PC-3 (cell line): ENCODE measurements at regions of chr3 and their contacts with region 1.

Region 1: GRCh38 chr3:12629560-12629959 is 34.4 kb downstream of the RAF1 start:
- DNase-seq: peak; percentile 15
- ATAC-seq: peak; percentile 91
- H3K4me3 ChIP-seq: no peak overlapping the region
- H3K27ac ChIP-seq: no peak overlapping the region
- H3K4me1 ChIP-seq: peaks cover 6% of the 10 kb centered on the region; the same call in 1 of the 2 replicates
- H3K27me3 ChIP-seq: no peaks in the 10 kb centered on the region
- CTCF ChIP-seq: no peak

Region 2: GRCh38 chr3:12484198-12484974 is 145.2 kb before region 1 on chr3 and contains the start of gene TSEN2:
- CTCF ChIA-PET with region 1: no interaction called
- POLR2A ChIA-PET with region 1: no interaction called
- intact Hi-C with region 1: no loop called
- DNase-seq: peak; percentile 98
- ATAC-seq: peak; percentile 80
- H3K4me3 ChIP-seq: peak within 1 kb of the TSS; percentile 81
- H3K27ac ChIP-seq: peak within 1 kb of the TSS; percentile 81
- H3K4me1 ChIP-seq: peaks cover 57% of the 10 kb centered on the region
- H3K27me3 ChIP-seq: no peaks in the 10 kb centered on the region
- CTCF ChIP-seq: no peak
- total RNA-seq, gene TSEN2: 40.2 and 51.0 TPM in 2 replicates

Region 3: DNA sequence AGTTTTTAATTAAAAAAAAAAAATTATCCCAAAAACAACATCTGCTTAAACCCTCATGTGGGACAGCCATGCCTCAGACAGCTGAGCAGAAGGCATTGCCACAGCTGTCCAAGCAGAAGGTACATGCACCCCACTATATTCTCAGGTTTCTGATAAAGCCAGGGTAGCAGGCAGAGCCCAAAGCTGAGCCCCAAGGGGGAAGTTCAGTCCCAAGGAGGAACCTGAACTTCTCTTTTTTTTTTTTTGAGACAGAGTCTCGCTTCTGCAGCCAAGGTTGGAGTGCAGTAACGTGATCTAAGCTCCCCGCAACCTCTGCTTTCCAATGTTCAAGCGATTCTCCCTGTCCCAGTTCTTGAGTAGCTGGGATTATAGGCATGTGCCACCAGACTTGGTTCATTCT is 39.5 kb before region 1 on chr3:
- CTCF ChIA-PET with region 1: no interaction called
- POLR2A ChIA-PET with region 1: interaction called, 4 read pairs
- intact Hi-C with region 1: loop called (anchors 5 kb)
- DNase-seq: no peak
- ATAC-seq: no peak
- H3K4me3 ChIP-seq: no peak overlapping the region
- H3K27ac ChIP-seq: no peak overlapping the region
- H3K4me1 ChIP-seq: 0 out of 2 replicates have a peak, but pooled peaks cover 6% of the 10 kb centered on the region
- H3K27me3 ChIP-seq: no peaks in the 10 kb centered on the region
- CTCF ChIP-seq: no peak

Region 4: DNA sequence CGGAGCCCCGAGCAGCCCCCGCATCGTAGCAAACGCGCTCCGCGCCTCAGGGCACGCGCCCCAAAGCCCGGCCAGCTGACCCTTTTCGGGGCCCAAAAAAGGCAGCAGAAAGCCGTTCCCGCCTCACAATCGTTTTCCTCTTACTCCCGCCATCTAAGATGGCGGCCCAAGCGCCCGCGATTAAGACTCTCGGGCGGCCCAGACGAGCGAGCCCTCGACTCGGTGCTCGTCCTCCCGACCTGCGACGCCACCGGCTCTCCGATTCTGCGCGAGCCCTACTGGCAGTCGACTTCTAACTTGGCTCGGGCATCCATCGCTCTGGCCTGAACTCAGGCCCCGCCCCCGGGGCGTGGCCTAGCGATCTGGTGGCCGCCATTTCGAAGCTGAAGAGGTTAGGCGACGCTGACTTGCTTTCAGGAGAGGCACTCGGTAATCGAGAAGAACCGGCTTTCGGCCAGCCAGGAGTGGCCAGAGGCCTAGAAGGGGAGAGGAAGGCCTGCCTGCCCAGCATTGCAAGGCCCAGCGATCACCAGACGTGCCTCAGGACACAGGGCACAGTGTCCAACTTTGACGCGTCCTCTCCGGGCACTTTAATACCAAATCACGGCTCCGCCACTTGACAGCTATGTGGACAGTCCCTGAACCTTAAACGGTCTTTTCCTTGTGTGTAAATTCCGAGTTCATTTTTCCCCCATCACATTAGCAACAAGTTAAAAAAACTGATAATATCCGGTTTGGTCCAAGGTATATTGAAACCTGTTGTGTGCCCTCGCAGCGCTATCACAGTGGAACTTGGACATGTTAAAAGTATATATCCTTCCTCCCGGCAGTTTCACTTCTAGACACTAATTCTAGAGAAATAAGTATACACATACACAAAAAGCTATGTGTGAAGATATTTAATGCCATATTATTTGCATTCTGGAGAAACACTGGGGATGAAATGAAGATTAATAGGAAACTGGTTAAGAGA is 34.7 kb after region 1 on chr3 and contains the start of gene RAF1:
- CTCF ChIA-PET with region 1: no interaction called
- POLR2A ChIA-PET with region 1: no interaction called
- intact Hi-C with region 1: loop called (anchors 5 kb)
- DNase-seq: peak; percentile 99
- ATAC-seq: peak; percentile 86
- H3K4me3 ChIP-seq: peak within 1 kb of the TSS; percentile 92
- H3K27ac ChIP-seq: peak within 1 kb of the TSS; percentile 85
- H3K4me1 ChIP-seq: peaks cover 27% of the 10 kb centered on the region
- H3K27me3 ChIP-seq: no peaks in the 10 kb centered on the region
- CTCF ChIP-seq: no peak
- total RNA-seq, gene RAF1: 113 and 130 TPM in 2 replicates